HCT116 (cell line): ENCODE measurements at regions of chr2 and their contacts with region 1.

Region 1: GRCh38 chr2:161586517-161587167 is 37.6 kb upstream of the SLC4A10 start:
- DNase-seq: peak; percentile 23
- ATAC-seq: peak; percentile 69
- H3K4me3 ChIP-seq: no peak overlapping the region
- H3K27ac ChIP-seq: no peak overlapping the region
- H3K4me1 ChIP-seq: no peaks in the 10 kb centered on the region
- H3K27me3 ChIP-seq: no peaks in the 10 kb centered on the region
- CTCF ChIP-seq: peak; percentile 59 to 84 (median 68); a peak in 5 of 6 replicates
- POLR2A ChIP-seq: no peak
- RAD21 ChIP-seq: peak; percentile 88

Region 2: DNA sequence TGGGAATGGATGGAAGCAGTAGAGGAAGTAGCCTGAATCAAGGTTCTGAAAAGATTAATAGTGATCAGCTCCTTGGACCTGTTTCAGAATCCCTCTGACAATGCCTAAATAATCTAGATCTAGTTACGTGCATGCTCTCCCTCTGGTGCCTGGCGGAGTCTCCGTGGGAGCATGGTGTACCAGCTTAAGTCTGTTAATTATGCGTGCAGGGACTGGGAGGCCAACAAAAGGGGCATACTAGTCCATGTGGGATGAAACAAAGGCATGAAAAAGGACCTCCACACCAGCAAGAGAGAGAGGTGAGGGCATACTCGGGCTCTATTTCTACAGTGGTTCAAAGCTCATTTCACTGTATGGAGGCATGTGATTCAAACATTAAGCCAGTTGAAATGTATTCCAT is 287.1 kb after region 1 on chr2:
- CTCF ChIA-PET with region 1: no interaction called
- POLR2A ChIA-PET with region 1: no interaction called
- RAD21 ChIA-PET with region 1: no interaction called
- intact Hi-C with region 1: no loop called
- DNase-seq: no peak
- ATAC-seq: no peak
- H3K4me3 ChIP-seq: no peak overlapping the region
- H3K27ac ChIP-seq: no peak overlapping the region
- H3K4me1 ChIP-seq: no peaks in the 10 kb centered on the region
- H3K27me3 ChIP-seq: no peaks in the 10 kb centered on the region
- CTCF ChIP-seq: no peak
- POLR2A ChIP-seq: no peak
- RAD21 ChIP-seq: no peak

Region 3: DNA sequence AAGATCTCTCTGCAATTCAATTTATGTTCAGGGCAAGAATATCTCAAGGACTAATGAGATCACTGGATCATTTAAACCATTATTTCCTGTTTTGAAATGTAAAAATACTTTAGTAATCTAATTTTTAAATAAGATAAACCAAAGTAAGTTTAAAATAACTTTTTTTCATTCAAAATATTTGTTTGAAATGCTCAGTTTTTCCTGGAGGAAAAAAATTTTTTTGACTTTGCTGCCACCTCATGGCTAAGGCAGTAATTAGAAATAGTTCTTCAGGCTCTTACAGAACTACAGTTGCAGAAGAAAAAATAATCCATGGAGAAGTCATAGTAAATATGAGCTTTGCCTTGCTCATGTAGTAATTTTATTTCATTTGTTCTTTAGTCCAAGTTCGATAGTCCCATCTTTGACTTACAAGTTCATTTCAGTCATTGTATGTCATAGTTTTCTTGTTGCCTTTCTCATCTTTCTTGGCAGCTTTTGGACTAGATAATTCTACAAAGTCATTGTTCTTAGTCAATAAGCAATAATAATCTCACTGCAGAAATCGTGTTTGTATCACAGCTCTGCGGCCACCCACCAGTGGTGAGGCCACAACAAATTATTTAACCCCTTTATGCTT is 360.0 kb after region 1 on chr2:
- CTCF ChIA-PET with region 1: interaction called, 59 read pairs
- POLR2A ChIA-PET with region 1: no interaction called
- RAD21 ChIA-PET with region 1: interaction called, 3 to 4 read pairs
- intact Hi-C with region 1: loop called (anchors 1 kb)
- DNase-seq: peak; percentile 38
- ATAC-seq: peak; percentile 49; the same call in 1 of the 2 replicates
- H3K4me3 ChIP-seq: no peak overlapping the region
- H3K27ac ChIP-seq: no peak overlapping the region
- H3K4me1 ChIP-seq: no peaks in the 10 kb centered on the region
- H3K27me3 ChIP-seq: no peaks in the 10 kb centered on the region
- CTCF ChIP-seq: peak; percentile 30 to 70 (median 55); a peak in 5 of 6 replicates
- POLR2A ChIP-seq: no peak
- RAD21 ChIP-seq: peak; percentile 79

Region 4: DNA sequence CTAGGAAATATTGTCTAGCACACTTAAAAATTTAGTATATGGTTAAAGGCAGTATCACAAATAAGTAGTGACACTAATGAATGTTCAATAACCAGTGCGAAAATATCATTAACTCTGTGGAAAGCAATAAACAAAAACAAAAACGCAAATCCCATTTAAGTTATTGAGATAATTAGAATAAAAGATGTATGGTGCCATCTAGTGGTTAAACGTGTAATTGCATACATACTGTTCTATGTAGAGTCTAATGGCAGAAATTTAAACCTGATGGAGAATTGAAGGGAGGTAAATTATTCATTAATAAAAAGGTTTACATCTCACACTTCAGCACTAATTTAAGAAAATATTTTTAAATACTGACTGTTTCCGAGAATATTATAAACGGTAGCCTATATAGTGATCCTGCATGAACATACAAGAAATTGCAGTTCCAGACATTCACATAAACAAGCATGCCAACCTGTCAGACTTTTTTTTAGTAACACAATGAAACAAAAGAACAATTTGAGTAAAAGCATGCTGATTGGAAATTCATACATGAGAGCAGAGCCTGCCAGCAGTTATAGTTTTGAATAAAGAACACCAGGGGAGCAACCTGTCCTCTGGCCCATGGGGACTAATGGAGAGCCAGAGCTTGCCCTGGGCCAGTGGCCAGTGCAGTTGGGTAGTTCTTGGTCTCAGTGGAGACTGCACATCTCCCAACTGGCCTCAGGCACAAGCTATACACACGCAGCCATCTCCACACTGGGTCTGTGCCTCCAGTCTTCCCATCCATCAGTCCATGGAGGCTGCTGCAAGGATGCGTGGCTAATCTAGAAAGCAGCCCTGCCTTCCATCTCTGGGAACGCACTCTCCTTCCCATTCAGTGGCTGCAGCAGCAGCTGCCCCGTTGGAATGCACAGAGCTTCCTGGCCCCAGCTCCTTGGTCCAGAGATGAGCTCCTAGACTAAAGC is 537.4 kb after region 1 on chr2:
- CTCF ChIA-PET with region 1: interaction called, 5 read pairs
- POLR2A ChIA-PET with region 1: no interaction called
- RAD21 ChIA-PET with region 1: interaction called in 1 of 2 experiments, 3 read pairs
- intact Hi-C with region 1: loop called (anchors 1 kb)
- DNase-seq: peak; percentile 61
- ATAC-seq: peak; percentile 70
- H3K4me3 ChIP-seq: no peak overlapping the region
- H3K27ac ChIP-seq: no peak overlapping the region
- H3K4me1 ChIP-seq: no peaks in the 10 kb centered on the region
- H3K27me3 ChIP-seq: no peaks in the 10 kb centered on the region
- CTCF ChIP-seq: peak; percentile 32 to 86 (median 72); a peak in 5 of 6 replicates
- POLR2A ChIP-seq: no peak
- RAD21 ChIP-seq: peak; percentile 86

Region 5: GRCh38 chr2:162301151-162301804 is 714.6 kb after region 1 on chr2:
- CTCF ChIA-PET with region 1: interaction called, 7 read pairs
- POLR2A ChIA-PET with region 1: no interaction called
- RAD21 ChIA-PET with region 1: no interaction called
- intact Hi-C with region 1: loop called (anchors 2 kb)
- DNase-seq: peak; percentile 41
- ATAC-seq: peak; percentile 83
- H3K4me3 ChIP-seq: no peak overlapping the region
- H3K27ac ChIP-seq: no peak overlapping the region
- H3K4me1 ChIP-seq: no peaks in the 10 kb centered on the region
- H3K27me3 ChIP-seq: no peaks in the 10 kb centered on the region
- CTCF ChIP-seq: peak; percentile 64 to 91 (median 65); a peak in 5 of 6 replicates
- POLR2A ChIP-seq: no peak
- RAD21 ChIP-seq: peak; percentile 71